ENCODE measurements at regions of chr14 and their contacts with region 1.

Region 1: GRCh38 chr14:31420319-31421111 is at the start of gene HEATR5A:
- DNase-seq: peak; percentile 90 to 92 (median 91)
- H3K4me3 ChIP-seq: peak within 1 kb of the TSS; percentile 97 to 99
- H3K4me3 Mint-ChIP-seq: peak within 1 kb of the TSS; percentile 92 to 100 (median 98)
- H3K27ac ChIP-seq: peak within 1 kb of the TSS; percentile 66
- H3K27ac Mint-ChIP-seq: peak within 1 kb of the TSS; percentile 80 to 99 (median 96)
- H3K4me1 ChIP-seq: peaks cover 17% of the 10 kb centered on the region
- H3K4me1 Mint-ChIP-seq: peaks cover 11 to 36% (median 20%) of the 10 kb centered on the region in 4 donors
- H3K27me3 ChIP-seq: no peaks in the 10 kb centered on the region
- H3K27me3 Mint-ChIP-seq: no peaks in the 10 kb centered on the region
- total RNA-seq, gene HEATR5A: 15.1 to 16.4 TPM

Region 2: GRCh38 chr14:30621940-30622830 is 798.3 kb before region 1 on chr14 and contains the start of gene SCFD1:
- CTCF ChIA-PET with region 1: no interaction called
- POLR2A ChIA-PET with region 1: interaction called, 12 read pairs
- intact Hi-C with region 1: no loop called
- DNase-seq: peak; percentile 88 to 93 (median 90)
- H3K4me3 ChIP-seq: peak within 1 kb of the TSS; percentile 74 to 97
- H3K4me3 Mint-ChIP-seq: peak within 1 kb of the TSS; percentile 93 to 99 (median 96)
- H3K27ac ChIP-seq: peak within 1 kb of the TSS; percentile 81
- H3K27ac Mint-ChIP-seq: peak within 1 kb of the TSS; percentile 96 to 99 (median 97)
- H3K4me1 ChIP-seq: peaks cover 52% of the 10 kb centered on the region
- H3K4me1 Mint-ChIP-seq: peaks cover 26 to 53% (median 40%) of the 10 kb centered on the region in 4 donors
- H3K27me3 ChIP-seq: no peaks in the 10 kb centered on the region
- H3K27me3 Mint-ChIP-seq: no peaks in the 10 kb centered on the region
- total RNA-seq, gene SCFD1: 58.1 to 72.6 TPM

Region 3: GRCh38 chr14:31122098-31122611 is 298.4 kb before region 1 on chr14:
- CTCF ChIA-PET with region 1: no interaction called
- POLR2A ChIA-PET with region 1: interaction called, 8 read pairs
- intact Hi-C with region 1: loop called (anchors 1 kb)
- DNase-seq: no peak
- H3K4me3 ChIP-seq: no peak overlapping the region
- H3K4me3 Mint-ChIP-seq: no peak overlapping the region
- H3K27ac ChIP-seq: no peak overlapping the region
- H3K27ac Mint-ChIP-seq: peak overlapping the region in 1 of 7 donors; percentile 29
- H3K4me1 ChIP-seq: peaks cover 27% of the 10 kb centered on the region
- H3K4me1 Mint-ChIP-seq: peaks cover 21 to 26% (median 23%) of the 10 kb centered on the region in 4 donors
- H3K27me3 ChIP-seq: no peaks in the 10 kb centered on the region
- H3K27me3 Mint-ChIP-seq: no peaks in the 10 kb centered on the region

Region 4: DNA sequence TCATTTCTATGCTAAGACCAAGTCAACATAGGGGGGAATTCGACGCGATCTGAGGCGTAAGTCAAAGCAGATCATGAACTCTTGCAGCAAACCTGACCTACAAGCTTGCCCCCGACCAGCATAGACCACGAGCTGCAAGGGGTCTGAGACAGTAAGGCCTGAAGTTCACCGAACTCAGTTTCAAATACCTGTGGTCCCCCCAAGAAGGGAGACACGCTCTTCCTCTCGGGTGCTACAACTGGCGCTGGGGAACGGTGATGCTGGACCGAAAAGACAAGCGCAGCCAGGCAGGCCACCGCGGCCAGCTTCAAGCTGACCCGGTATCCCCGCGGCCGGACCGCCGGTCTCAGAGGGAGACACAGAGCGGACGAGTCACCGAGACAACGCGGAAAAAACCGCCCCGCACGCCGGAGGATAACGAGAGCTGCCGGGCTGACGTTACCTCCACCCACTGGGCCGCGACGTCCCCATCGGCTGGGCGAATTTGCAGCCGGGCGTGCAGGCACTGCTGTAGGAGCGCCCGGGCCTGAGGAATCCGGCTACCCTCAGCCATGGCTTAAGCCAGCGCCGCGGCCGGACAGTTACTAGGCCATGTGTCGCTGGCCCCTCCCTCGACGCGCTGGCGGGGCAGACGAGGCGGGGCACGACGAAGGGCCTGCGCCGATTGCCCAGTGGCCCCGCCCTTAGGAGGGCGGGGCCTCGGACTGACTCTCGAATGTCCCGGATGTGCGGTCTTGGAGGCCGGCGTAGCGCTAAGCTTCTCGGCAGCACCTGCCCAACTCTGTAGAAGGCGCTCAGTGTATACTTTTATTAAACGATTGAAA is 36.5 kb after region 1 on chr14 and contains the start of gene DTD2:
- CTCF ChIA-PET with region 1: interaction called, 16 read pairs
- POLR2A ChIA-PET with region 1: interaction called, 50 read pairs
- intact Hi-C with region 1: loop called (anchors 1 kb)
- DNase-seq: peak; percentile 87 to 88 (median 88)
- H3K4me3 ChIP-seq: peak within 1 kb of the TSS; percentile 53 to 69
- H3K4me3 Mint-ChIP-seq: peak within 1 kb of the TSS; percentile 96 to 99 (median 97)
- H3K27ac ChIP-seq: peak within 1 kb of the TSS; percentile 89
- H3K27ac Mint-ChIP-seq: peak within 1 kb of the TSS; percentile 86 to 98 (median 97)
- H3K4me1 ChIP-seq: peaks cover 13% of the 10 kb centered on the region
- H3K4me1 Mint-ChIP-seq: peaks cover 13 to 34% (median 26%) of the 10 kb centered on the region in 4 donors
- H3K27me3 ChIP-seq: no peaks in the 10 kb centered on the region
- H3K27me3 Mint-ChIP-seq: peaks cover 0 to 3% of the 10 kb centered on the region in 2 donors
- total RNA-seq, gene DTD2: 15.1 to 20.2 TPM

Region 5: DNA sequence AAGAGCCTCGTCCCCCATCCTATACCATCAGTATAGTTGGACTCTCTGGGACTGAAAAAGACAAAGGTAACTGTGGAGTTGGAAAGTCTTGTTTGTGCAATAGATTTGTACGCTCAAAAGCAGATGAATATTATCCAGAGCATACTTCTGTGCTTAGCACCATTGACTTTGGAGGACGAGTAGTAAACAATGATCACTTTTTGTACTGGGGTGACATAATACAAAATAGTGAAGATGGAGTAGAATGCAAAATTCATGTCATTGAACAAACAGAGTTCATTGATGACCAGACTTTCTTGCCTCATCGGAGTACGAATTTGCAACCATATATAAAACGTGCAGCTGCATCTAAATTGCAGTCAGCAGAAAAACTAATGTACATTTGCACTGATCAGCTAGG is 670.2 kb after region 1 on chr14:
- CTCF ChIA-PET with region 1: no interaction called
- POLR2A ChIA-PET with region 1: no interaction called
- intact Hi-C with region 1: no loop called
- DNase-seq: no peak
- H3K4me3 ChIP-seq: no peak overlapping the region
- H3K4me3 Mint-ChIP-seq: no peak overlapping the region
- H3K27ac ChIP-seq: no peak overlapping the region
- H3K27ac Mint-ChIP-seq: no peak overlapping the region
- H3K4me1 ChIP-seq: peaks cover 9% of the 10 kb centered on the region
- H3K4me1 Mint-ChIP-seq: peaks cover 27 to 36% (median 28%) of the 10 kb centered on the region in 4 donors
- H3K27me3 ChIP-seq: no peaks in the 10 kb centered on the region
- H3K27me3 Mint-ChIP-seq: no peaks in the 10 kb centered on the region

Region 6: DNA sequence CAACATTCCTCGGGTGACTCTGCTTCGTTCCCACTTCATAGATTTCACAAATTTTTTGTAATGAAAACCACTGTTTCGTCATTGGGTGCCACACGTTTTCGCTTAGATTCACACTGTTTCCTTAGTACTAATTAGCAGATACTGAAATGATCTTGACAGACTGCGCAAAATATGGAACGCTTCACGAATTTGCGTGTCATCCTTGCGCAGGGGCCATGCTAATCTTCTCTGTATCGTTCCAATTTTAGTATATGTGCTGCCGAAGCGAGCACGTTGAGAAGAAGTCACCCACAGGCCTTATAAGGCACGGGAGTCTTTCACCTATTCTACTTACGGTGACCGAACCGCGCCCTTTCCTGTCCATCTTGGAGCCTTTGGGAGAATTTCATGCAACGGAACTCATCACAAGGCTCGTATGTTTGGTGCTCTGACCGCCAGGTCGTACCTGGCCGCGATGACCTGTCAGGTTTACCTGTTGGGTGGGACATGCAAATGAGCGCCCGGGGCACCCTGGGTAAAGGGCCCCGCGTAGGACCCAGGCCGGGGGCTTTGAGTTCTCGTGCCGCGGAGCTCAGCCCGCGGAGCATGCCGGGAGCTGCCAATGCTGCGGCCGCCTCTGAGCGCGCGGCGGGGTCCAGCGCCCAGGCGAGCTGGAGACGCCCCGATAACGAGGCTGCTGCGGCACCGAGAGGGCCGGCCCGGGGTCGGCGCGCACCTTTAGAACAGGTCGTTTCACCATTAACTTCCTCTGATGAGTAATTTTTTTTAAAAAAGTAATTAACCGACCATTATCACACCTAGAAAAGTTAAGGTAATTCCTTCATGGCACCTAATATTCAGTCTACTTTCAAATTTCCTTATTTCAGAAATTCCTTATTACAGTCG is 782.7 kb after region 1 on chr14 and contains the start of gene RNU6-8:
- CTCF ChIA-PET with region 1: no interaction called
- POLR2A ChIA-PET with region 1: interaction called, 4 read pairs
- intact Hi-C with region 1: loop called (anchors 1 kb)
- DNase-seq: peak; percentile 89 to 95 (median 94)
- H3K4me3 ChIP-seq: peak within 1 kb of the TSS; percentile 50 to 68
- H3K4me3 Mint-ChIP-seq: peak within 1 kb of the TSS; percentile 90 to 96 (median 93)
- H3K27ac ChIP-seq: peak within 1 kb of the TSS; percentile 94
- H3K27ac Mint-ChIP-seq: peak within 1 kb of the TSS; percentile 96 to 100 (median 99)
- H3K4me1 ChIP-seq: peaks cover 23% of the 10 kb centered on the region
- H3K4me1 Mint-ChIP-seq: peaks cover 22 to 41% (median 28%) of the 10 kb centered on the region in 4 donors
- H3K27me3 ChIP-seq: no peaks in the 10 kb centered on the region
- H3K27me3 Mint-ChIP-seq: peaks cover 0 to 2% of the 10 kb centered on the region in 2 donors
- total RNA-seq, gene RNU6-8: not detected

Measured in CD4-positive, alpha-beta memory T cell (primary cell).